HEK293T (cell line): ENCODE measurements at regions of chr7 and their contacts with region 1.

Region 1: DNA sequence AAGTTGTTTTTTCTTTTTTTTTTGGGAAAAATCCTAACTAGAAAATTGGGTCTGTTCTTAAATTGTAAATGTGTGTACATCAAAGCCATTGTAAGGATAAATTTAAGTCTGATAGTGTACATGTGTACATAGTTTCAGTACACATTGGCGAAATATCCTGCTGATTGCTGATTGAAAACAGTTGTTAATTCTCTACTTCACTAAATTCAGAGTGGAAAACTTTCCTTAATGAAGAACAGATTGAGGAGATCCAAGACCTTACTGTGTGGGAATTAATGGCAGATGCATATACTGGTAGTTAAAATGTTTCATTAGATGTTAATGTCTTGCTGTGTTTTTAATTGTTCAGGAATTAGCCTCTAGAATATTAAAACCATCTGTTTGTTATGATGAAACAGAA is 506.0 kb downstream of the AUTS2 start:
- DNase-seq: no peak

Region 2: GRCh38 chr7:69962186-69963065 is 141.8 kb before region 1 on chr7:
- CTCF ChIA-PET with region 1: no interaction called
- POLR2A ChIA-PET with region 1: no interaction called
- DNase-seq: no peak

Region 3: GRCh38 chr7:70037171-70037933 is 66.9 kb before region 1 on chr7:
- CTCF ChIA-PET with region 1: no interaction called
- POLR2A ChIA-PET with region 1: no interaction called
- DNase-seq: no peak

Region 4: DNA sequence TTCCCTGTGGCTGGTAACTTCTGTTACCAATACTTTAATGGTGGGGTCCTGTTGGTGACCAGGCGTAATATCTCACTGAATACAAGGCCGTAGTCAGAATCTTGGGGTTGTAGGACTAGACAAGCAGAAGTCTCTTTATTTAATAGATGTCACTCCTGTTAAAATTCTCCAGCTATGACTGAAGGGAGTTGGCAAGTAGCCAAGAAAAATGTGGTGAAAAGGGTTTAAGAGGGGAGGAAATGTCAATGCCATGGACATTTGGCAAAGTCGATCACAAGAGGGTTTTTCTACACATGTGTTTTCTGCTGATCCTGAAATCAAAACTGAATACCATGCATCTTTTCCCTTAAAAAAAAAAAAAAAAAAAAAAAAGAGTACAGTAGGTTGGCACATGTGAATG is 27.6 kb after region 1 on chr7:
- CTCF ChIA-PET with region 1: interaction called, 11 read pairs
- POLR2A ChIA-PET with region 1: no interaction called
- DNase-seq: no peak